Ascending aorta (tissue), 2 donors: ENCODE measurements at regions of chr11 and their contacts with region 1.

Region 1: GRCh38 chr11:6315811-6316425 is 4.4 kb downstream of the CAVIN3 start:
- DNase-seq: peak in 1 of 2 donors; percentile 75
- H3K4me3 ChIP-seq: peak overlapping the region; percentile 26 to 28
- H3K27ac ChIP-seq: peak overlapping the region; percentile 98 to 99
- H3K4me1 ChIP-seq: peaks cover 12 to 23% of the 10 kb centered on the region in 2 donors
- H3K27me3 ChIP-seq: no peaks in the 10 kb centered on the region
- CTCF ChIP-seq: peak; percentile 73 to 89 (median 85)

Region 2: DNA sequence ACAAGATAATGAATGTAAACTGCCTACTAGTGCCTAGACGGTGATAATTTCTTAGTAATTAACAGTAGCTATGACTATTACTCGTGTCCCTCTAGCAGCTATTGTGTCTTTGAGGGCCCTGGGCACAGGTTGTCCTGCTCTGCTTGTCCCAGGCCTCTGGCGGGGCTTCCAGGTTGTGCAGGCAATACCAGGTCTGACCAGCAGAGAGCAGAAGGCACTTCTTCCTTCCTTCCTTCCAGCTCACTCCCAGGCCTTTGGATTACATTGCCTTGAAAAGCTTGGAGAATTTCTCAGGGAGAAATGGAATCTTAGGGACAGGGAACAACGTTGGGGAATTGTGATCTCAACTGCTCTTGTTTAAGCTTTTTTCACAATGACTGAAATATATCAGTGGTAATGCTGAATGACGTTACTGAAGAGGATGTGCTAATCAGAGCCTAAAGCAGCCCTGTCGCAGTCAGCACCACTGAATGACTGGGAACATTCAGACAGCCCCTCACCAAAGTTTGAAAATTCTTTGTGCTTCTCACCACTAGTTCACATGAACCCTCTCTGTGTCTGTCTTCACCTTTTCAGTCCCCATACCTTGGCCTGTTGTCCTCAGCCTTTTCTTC is 64.7 kb before region 1 on chr11:
- intact Hi-C with region 1: loop called (anchors 1 kb)
- DNase-seq: peak in 1 of 2 donors; percentile 78
- H3K4me3 ChIP-seq: no peak overlapping the region
- H3K27ac ChIP-seq: peak overlapping the region in 1 of 2 donors; percentile 5
- H3K4me1 ChIP-seq: peaks cover 0 to 2% of the 10 kb centered on the region in 2 donors
- H3K27me3 ChIP-seq: no peaks in the 10 kb centered on the region
- CTCF ChIP-seq: peak; percentile 72 to 87 (median 84)

Region 3: GRCh38 chr11:6353367-6353987 is 37.6 kb after region 1 on chr11:
- intact Hi-C with region 1: loop called (anchors 1 kb)
- DNase-seq: peak in 1 of 2 donors; percentile 72
- H3K4me3 ChIP-seq: no peak overlapping the region
- H3K27ac ChIP-seq: no peak overlapping the region
- H3K4me1 ChIP-seq: peaks cover 5 to 10% of the 10 kb centered on the region in 2 donors
- H3K27me3 ChIP-seq: no peaks in the 10 kb centered on the region
- CTCF ChIP-seq: peak; percentile 81 to 96 (median 95)

Region 4: GRCh38 chr11:6389921-6390724 is 74.2 kb after region 1 on chr11 and contains the start of gene SMPD1:
- intact Hi-C with region 1: loop called (anchors 1 kb)
- DNase-seq: peak; percentile 92 to 96
- H3K4me3 ChIP-seq: peak within 1 kb of the TSS; percentile 89 to 96
- H3K27ac ChIP-seq: peak within 1 kb of the TSS; percentile 90 to 95
- H3K4me1 ChIP-seq: peaks cover 9 to 14% of the 10 kb centered on the region in 2 donors
- H3K27me3 ChIP-seq: no peaks in the 10 kb centered on the region
- CTCF ChIP-seq: no peak
- total RNA-seq, gene SMPD1: 48.6 TPM

Region 5: GRCh38 chr11:6612213-6613041 is 296.5 kb after region 1 on chr11 and contains the start of gene TAF10:
- intact Hi-C with region 1: loop called (anchors 5 kb)
- DNase-seq: peak; percentile 95 to 99
- H3K4me3 ChIP-seq: peak within 1 kb of the TSS; percentile 76 to 95
- H3K27ac ChIP-seq: peak within 1 kb of the TSS; percentile 95 to 97
- H3K4me1 ChIP-seq: peaks cover 18 to 37% of the 10 kb centered on the region in 2 donors
- H3K27me3 ChIP-seq: no peaks in the 10 kb centered on the region
- CTCF ChIP-seq: peak in 2 of 3 experiments; percentile 43 to 47
- total RNA-seq, gene TAF10: 76.0 TPM